A549 (cell line): ENCODE measurements at regions of chr15 and their contacts with region 1.

Region 1: GRCh38 chr15:40217159-40217824 is 21.6 kb upstream of the PAK6 start:
- DNase-seq: peak; percentile 38 to 61
- ATAC-seq: peak; percentile 83 to 88; a peak in 5 of 6 replicates
- H3K4me3 ChIP-seq: no peak overlapping the region
- H3K27ac ChIP-seq: no peak overlapping the region
- H3K4me1 ChIP-seq: no peaks in the 10 kb centered on the region
- CTCF ChIP-seq: peak; percentile 80
- EP300 ChIP-seq: no peak
- POLR2A ChIP-seq: no peak
- RAD21 ChIP-seq: peak; percentile 79 to 80

Region 2: DNA sequence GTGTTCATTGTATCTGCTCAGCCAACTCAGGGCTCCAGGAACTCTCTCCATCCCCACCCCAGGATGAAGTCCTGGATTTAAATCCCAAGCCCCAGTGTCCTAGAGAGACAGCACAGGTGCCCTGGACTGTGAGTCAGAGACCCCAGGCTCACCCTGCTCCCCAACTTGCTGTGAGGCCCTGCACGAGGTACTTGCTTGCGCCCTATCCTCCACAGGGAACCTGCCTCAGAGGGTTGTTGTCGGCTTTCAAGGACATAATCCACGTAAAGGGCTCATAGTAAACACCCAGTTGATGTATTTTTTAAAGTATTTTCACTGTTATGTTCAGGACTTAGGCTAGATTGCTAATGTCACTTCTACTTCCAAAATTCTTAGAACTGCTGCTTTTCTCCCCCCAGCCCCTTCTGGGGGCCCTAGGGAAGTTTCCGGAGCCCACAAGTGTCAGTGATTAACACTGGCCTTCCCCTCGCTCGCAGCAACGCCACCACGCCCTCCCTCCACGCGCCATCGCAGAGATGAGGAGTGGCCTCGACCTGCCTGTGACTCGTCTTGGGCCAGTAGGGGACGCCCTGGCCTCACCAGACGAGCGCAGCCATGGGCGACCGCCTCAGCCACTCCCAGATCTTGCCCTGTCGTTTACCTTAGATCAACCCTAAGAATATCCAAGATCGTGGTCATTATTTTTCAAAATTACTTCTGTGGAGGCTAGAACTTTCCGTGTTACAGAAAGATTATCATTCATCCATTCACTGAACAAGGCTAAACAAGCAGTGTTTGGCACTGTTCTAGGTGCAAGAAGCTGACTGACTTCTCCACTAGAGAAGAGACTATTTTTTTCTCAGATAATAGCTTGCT is 172.3 kb before region 1 on chr15:
- CTCF ChIA-PET with region 1: interaction called, 40 read pairs
- POLR2A ChIA-PET with region 1: interaction called, 3 read pairs
- DNase-seq: peak; percentile 78 to 84
- ATAC-seq: peak; percentile 94 to 98
- H3K4me3 ChIP-seq: peak overlapping the region; percentile 29
- H3K27ac ChIP-seq: peak overlapping the region; percentile 61 to 85
- H3K4me1 ChIP-seq: peaks cover 45% of the 10 kb centered on the region
- CTCF ChIP-seq: peak; percentile 83
- EP300 ChIP-seq: no peak
- POLR2A ChIP-seq: no peak
- RAD21 ChIP-seq: peak; percentile 93 to 97

Region 3: GRCh38 chr15:40232625-40233070 is 15.4 kb after region 1 on chr15:
- CTCF ChIA-PET with region 1: interaction called, 31 read pairs
- POLR2A ChIA-PET with region 1: no interaction called
- DNase-seq: no peak
- ATAC-seq: no peak
- H3K4me3 ChIP-seq: no peak overlapping the region
- H3K27ac ChIP-seq: no peak overlapping the region
- H3K4me1 ChIP-seq: no peaks in the 10 kb centered on the region
- CTCF ChIP-seq: no peak
- EP300 ChIP-seq: no peak
- POLR2A ChIP-seq: no peak
- RAD21 ChIP-seq: no peak

Region 4: DNA sequence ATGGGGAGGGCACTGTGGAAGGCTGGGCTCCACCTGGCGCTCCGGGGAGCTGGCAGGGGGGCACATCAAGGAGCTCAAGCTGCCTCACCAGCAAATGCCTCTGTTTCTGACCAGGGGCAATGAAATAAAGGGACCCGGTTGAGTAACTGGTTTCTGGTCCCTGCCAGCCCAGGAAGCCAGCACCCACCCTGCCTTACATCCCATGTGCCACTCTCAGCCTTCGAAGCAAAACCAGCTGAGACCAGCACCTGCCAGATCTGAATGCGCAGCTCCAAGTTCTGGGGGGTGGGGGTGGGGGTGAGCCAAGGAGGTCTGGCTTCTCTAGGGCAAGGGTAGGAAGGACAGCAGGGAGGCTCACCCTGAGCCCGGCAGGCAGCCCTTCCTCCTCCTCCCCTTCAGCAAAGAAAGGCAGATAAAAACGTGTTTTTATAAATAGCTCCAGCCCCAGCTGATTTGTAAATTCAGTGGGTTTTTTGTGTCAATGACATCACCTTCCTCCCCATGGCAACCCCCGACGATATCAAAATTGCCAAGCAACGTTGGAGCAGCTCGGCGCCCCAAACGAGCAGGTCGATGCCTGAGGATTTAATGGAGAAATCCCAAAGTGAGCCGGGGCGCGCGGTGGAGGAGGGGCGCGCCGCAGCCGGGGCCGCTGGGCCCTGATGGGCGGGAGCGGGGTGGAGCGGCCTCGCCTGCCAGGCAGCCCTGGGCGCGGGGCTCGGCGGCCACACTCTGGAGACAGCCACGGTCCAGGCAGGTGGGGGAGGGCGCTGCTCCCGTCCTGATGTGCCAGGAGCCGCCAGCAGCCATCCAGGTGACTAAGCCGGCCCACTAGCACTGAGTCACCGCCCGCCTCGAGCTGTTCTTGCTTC is 21.5 kb after region 1 on chr15 and contains the start of gene PAK6:
- CTCF ChIA-PET with region 1: interaction called, 31 read pairs
- POLR2A ChIA-PET with region 1: no interaction called
- DNase-seq: peak; percentile 30 to 73
- ATAC-seq: peak; percentile 83 to 92
- H3K4me3 ChIP-seq: peak within 1 kb of the TSS; percentile 46
- H3K27ac ChIP-seq: peak within 1 kb of the TSS; percentile 69 to 83
- H3K4me1 ChIP-seq: peaks cover 9% of the 10 kb centered on the region
- CTCF ChIP-seq: no peak
- EP300 ChIP-seq: no peak
- POLR2A ChIP-seq: no peak
- RAD21 ChIP-seq: no peak
- polyA plus RNA-seq, gene PAK6: 0.08 and 0.16 TPM in 2 replicates

Region 5: GRCh38 chr15:40249482-40250303 is 32.4 kb after region 1 on chr15:
- CTCF ChIA-PET with region 1: interaction called, 10 read pairs
- POLR2A ChIA-PET with region 1: no interaction called
- DNase-seq: no peak
- ATAC-seq: no peak; a peak in 1 of 6 replicates
- H3K4me3 ChIP-seq: no peak overlapping the region
- H3K27ac ChIP-seq: no peak overlapping the region
- H3K4me1 ChIP-seq: no peaks in the 10 kb centered on the region
- CTCF ChIP-seq: no peak
- EP300 ChIP-seq: no peak
- POLR2A ChIP-seq: no peak
- RAD21 ChIP-seq: no peak

Region 6: GRCh38 chr15:40290918-40291574 is 73.8 kb after region 1 on chr15:
- CTCF ChIA-PET with region 1: interaction called, 19 read pairs
- POLR2A ChIA-PET with region 1: no interaction called
- DNase-seq: peak; percentile 31 to 38
- ATAC-seq: peak; percentile 67 to 82
- H3K4me3 ChIP-seq: peak overlapping the region; percentile 34
- H3K27ac ChIP-seq: peak overlapping the region; percentile 61 to 87; a peak in 5 of 6 replicates
- H3K4me1 ChIP-seq: peaks cover 11% of the 10 kb centered on the region; the same call in 2 of the 3 replicates
- CTCF ChIP-seq: no peak
- EP300 ChIP-seq: no peak
- POLR2A ChIP-seq: no peak
- RAD21 ChIP-seq: no peak

Region 7: DNA sequence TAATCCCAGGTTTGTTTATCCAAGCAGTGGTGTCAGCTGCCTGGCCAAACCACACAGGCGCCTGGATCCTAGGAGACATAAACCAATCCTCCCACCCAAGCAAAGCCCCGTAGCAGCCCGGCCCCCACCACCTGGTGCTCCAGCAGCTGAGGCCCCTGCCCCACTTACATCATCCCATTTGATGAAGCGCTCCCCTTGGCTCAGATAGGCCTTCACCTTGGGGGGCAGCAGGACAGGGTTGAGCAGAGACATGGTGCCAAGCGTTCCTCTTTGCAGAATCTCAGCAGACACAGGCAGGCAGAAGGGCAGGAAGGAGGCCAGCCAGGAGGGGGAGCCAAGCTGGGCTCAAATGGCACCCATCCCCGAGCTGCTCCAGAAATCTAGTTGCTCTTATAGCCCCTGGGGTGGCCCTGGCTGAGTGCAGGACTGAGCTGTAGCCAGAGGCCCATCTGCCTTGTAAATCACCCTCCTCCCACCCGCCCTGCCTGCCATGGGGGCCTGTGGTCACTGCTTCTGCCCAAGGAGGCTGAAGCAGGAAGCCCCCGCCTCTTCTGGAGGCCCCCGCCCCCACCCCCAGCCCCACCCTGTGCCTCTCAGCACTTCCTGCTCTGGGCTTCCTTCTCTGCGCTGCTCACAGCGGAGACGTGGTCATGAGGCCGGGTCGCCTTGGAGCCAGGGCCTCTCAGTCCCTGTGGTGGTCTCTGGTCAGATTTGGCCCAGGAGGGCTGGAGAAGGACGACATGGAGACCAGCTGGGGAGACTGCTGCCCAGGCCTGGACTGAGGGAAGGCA is 90.3 kb after region 1 on chr15 and contains the start of gene PLCB2:
- CTCF ChIA-PET with region 1: interaction called, 13 read pairs
- POLR2A ChIA-PET with region 1: no interaction called
- DNase-seq: peak in 1 of 2 experiments; percentile 23
- ATAC-seq: peak; percentile 42 to 70; a peak in 4 of 6 replicates
- H3K4me3 ChIP-seq: no peak within 1 kb of the TSS
- H3K27ac ChIP-seq: no peak within 1 kb of the TSS
- H3K4me1 ChIP-seq: no peaks in the 10 kb centered on the region
- CTCF ChIP-seq: no peak
- EP300 ChIP-seq: no peak
- POLR2A ChIP-seq: no peak
- RAD21 ChIP-seq: no peak
- polyA plus RNA-seq, gene PLCB2: 0.19 and 0.30 TPM in 2 replicates